K562 (cell line): ENCODE measurements at regions of chr3 and their contacts with region 1.

Region 1: DNA sequence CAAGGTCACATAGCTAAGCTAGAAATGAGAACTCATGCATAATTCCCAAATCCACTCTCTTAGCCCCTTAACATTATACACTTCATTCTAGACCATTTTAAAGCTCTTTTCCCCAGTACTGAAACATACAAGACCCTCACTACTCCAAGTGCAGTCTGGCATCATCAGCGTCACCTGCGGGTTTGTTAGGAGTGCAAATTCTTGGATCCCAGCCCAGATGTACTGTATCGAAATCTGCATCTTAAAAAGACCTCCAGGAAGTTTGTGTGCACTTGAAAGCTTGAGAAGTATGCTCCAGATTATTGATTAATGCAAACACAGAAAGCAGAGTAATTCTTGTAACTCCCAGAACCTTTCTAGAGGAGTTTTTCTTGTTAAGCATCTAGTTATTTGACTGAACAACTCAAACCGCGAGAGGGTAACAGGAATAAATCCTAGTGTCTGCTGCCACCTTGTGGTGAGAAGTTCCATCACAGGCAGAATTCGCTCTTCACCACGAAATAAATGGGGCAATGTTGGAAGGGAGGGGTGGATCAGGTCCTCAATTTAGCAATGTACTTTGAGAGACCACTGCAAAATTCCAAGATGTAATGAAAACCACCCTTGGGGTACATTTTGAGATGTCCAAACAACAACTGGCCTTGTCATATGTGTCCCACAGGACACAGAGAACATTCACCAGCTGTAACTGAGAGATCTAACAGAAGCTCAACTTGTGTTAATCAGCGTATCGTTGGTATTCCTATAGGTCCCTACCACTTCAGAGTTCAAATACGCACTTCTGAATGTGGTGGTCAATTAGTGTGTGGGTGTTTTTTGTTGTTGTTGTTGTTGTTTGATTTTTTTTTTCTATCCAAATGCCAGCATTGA is 583 bp upstream of the C3orf49 start:
- DNase-seq: peak; percentile 37 to 51 (median 46)
- ATAC-seq: peak; percentile 78
- H3K4me3 ChIP-seq: no peak overlapping the region
- H3K27ac ChIP-seq: no peak overlapping the region
- H3K4me1 ChIP-seq: no peaks in the 10 kb centered on the region
- H3K27me3 ChIP-seq: no peaks in the 10 kb centered on the region
- CTCF ChIP-seq: peak; percentile 65 to 72 (median 68)
- EP300 ChIP-seq: no peak
- POLR2A ChIP-seq: no peak
- RAD21 ChIP-seq: peak; percentile 66 to 73

Region 2: DNA sequence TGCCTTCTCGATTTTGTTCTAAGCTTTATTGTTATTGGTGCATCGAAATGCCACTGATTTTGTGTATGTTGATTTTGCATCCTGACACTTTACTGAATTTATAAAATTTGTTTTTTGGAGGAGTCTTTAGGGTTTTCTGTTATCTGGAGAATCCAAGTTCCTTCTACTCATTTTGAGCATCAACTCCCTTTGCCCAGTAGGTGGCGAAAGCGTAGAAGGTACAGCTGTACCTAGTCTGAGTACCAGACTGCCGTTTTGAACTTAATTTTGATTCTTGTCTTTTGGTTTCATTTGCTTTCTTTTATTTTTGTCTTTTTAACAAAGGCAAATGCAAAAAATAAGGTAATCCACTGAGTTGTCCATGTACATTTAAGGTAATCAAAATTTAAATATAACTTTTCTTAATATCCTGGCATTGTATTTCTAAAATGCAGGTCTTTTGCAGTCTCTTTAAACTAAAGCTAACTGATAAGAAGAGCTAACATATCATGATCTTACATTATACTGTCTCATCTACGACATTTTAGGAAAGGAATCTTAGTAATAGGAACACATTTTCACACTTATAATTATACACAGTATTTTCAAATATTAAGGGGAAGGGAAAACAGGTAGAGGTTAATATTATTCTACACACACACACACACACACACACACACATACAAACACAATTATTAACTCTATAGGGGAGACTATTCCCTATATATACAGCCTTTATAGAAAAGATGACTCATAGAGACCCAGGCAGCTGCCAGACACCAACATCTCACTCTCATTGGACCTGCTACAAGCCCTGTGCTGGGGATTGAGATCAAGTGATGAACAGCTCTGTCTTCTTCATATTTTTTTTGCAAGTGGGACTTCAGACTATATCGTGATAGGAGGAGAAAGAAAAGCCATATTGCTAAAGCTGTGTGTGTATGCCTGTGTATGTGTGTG is 468.7 kb before region 1 on chr3:
- CTCF ChIA-PET with region 1: interaction called, 8 read pairs
- POLR2A ChIA-PET with region 1: no interaction called
- in situ Hi-C with region 1: loop called (anchors 5 kb)
- intact Hi-C with region 1: loop called (anchors 1 kb)
- DNase-seq: peak; percentile 16 to 52 (median 31)
- ATAC-seq: peak; percentile 67; the same call in 2 of the 3 replicates
- H3K4me3 ChIP-seq: no peak overlapping the region
- H3K27ac ChIP-seq: no peak overlapping the region
- H3K4me1 ChIP-seq: no peaks in the 10 kb centered on the region
- H3K27me3 ChIP-seq: no peaks in the 10 kb centered on the region
- CTCF ChIP-seq: peak; percentile 52 to 66 (median 58)
- EP300 ChIP-seq: no peak
- POLR2A ChIP-seq: no peak
- RAD21 ChIP-seq: peak; percentile 30 to 52

Region 3: GRCh38 chr3:63661248-63661647 is 157.3 kb before region 1 on chr3:
- CTCF ChIA-PET with region 1: interaction called, 6 read pairs
- POLR2A ChIA-PET with region 1: no interaction called
- in situ Hi-C with region 1: no loop called
- intact Hi-C with region 1: loop called (anchors 2 kb)
- DNase-seq: peak in 2 of 4 experiments; percentile 2 to 3
- ATAC-seq: 0 out of 3 replicates have a peak, but pooled peaks have one; percentile 32
- H3K4me3 ChIP-seq: no peak overlapping the region
- H3K27ac ChIP-seq: no peak overlapping the region
- H3K4me1 ChIP-seq: no peaks in the 10 kb centered on the region
- H3K27me3 ChIP-seq: no peaks in the 10 kb centered on the region
- CTCF ChIP-seq: no peak
- EP300 ChIP-seq: no peak
- POLR2A ChIP-seq: no peak
- RAD21 ChIP-seq: no peak

Region 4: DNA sequence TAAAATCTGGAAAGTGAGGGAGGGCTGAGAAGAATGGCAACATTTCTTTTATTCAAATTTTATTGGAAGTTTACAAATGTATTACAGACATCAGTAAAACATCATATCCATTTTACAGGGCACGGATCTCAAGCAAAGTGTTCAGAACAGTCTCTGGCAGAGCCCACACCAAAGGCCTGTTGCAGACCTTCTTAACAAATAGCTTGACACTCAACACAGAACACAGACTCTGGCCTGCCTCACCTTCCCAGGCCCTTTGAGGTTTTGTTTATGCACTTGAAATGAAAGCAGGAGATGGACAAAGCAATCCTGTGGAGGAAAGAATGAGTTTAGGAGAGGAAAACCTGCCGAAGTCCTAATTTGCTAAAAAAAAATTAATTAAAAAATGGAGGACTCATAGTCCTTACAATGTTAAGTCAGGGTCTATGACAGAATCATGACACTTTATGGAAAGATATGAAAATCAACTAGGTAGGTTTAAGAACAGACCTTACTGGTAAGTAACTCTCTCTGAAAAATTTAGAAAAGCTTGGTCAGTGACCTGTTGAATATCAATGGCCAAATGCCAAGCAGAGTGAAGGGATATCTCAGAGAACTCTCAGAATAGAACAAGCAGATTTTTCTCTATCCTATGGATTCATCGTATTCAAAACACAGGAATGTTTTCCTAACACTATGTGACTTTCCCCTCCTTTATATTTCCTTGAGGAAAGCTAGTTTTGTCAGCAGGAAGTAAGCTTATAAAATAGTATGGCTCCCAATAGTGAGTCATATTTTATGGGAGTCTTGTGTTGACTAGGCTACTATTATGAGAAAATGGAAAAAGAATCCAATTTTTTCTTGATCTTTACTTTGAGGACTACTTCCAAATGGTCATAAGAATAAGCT is 275.6 kb after region 1 on chr3:
- CTCF ChIA-PET with region 1: no interaction called
- POLR2A ChIA-PET with region 1: no interaction called
- in situ Hi-C with region 1: no loop called
- intact Hi-C with region 1: no loop called
- DNase-seq: no peak
- ATAC-seq: no peak
- H3K4me3 ChIP-seq: no peak overlapping the region
- H3K27ac ChIP-seq: no peak overlapping the region
- H3K4me1 ChIP-seq: no peaks in the 10 kb centered on the region
- H3K27me3 ChIP-seq: peaks cover 0 to 4% of the 10 kb centered on the region in 2 experiments; a peak in 2 of 5 replicates
- CTCF ChIP-seq: no peak
- EP300 ChIP-seq: no peak
- POLR2A ChIP-seq: no peak
- RAD21 ChIP-seq: no peak